Spleen (tissue), 13 donors: ENCODE measurements at regions of chr10 and their contacts with region 1.

Region 1: DNA sequence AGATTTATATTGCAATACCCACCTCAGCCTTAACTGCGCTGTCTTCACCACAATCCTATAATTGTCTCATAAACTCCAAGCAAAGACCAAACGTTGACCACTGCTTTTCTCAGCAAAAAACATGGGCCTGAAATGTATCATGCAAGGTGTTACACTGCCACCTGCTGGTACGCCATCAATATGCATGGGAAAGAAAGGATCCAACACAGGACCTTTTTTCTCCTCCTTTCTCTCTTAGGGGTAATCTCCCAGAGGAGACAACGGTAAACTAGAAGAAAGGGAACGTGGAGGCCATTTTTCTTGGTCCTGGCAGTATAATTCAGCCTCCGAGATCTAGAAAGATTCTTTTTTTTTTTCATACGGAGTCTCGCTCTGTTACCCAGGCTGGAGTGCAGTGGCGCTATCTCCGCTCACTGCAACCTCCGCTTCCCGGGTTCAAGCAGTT is 79.1 kb upstream of the MPP7 start:
- DNase-seq: peak; percentile 83
- H3K4me3 ChIP-seq: no peak overlapping the region
- H3K27ac ChIP-seq: peak overlapping the region in 5 of 8 donors; percentile 2 to 80 (median 60)
- H3K4me1 ChIP-seq: peaks cover 0 to 26% (median 5%) of the 10 kb centered on the region in 6 donors
- H3K27me3 ChIP-seq: peaks cover 0 to 18% (median 0%) of the 10 kb centered on the region in 7 donors
- CTCF ChIP-seq: peak; percentile 85 to 96 (median 93)
- POLR2A ChIP-seq: no peak

Region 2: DNA sequence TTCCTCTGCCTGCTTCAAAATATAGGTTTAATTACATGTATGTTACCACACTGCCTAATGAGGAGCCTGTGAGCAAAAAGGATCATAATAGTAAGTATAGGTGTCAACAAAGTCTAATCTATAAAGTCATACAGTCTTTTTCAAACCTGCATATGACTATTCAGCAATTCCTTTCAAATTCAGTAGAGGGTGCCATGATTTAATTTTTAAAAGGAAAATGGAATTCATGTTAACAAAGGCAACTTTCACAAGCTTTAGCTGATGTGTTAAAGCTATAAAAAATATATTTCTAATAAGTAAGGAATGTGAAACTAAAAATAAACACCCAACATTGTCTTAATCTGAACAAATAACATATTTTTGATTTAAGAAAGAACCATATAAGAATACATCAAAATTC is 131.1 kb before region 1 on chr10:
- intact Hi-C with region 1: loop called (anchors 2 kb)
- DNase-seq: no peak
- H3K4me3 ChIP-seq: no peak overlapping the region
- H3K27ac ChIP-seq: no peak overlapping the region
- H3K4me1 ChIP-seq: peaks cover 0 to 27% (median 4%) of the 10 kb centered on the region in 6 donors
- H3K27me3 ChIP-seq: no peaks in the 10 kb centered on the region
- CTCF ChIP-seq: peak in 10 of 11 experiments; percentile 18 to 65 (median 44)
- POLR2A ChIP-seq: no peak

Region 3: GRCh38 chr10:28291881-28292297 is 90.0 kb before region 1 on chr10:
- intact Hi-C with region 1: no loop called
- DNase-seq: no peak
- H3K4me3 ChIP-seq: no peak overlapping the region
- H3K27ac ChIP-seq: no peak overlapping the region
- H3K4me1 ChIP-seq: peaks cover 0 to 31% (median 0%) of the 10 kb centered on the region in 6 donors
- H3K27me3 ChIP-seq: no peaks in the 10 kb centered on the region
- CTCF ChIP-seq: no peak
- POLR2A ChIP-seq: no peak

Region 4: DNA sequence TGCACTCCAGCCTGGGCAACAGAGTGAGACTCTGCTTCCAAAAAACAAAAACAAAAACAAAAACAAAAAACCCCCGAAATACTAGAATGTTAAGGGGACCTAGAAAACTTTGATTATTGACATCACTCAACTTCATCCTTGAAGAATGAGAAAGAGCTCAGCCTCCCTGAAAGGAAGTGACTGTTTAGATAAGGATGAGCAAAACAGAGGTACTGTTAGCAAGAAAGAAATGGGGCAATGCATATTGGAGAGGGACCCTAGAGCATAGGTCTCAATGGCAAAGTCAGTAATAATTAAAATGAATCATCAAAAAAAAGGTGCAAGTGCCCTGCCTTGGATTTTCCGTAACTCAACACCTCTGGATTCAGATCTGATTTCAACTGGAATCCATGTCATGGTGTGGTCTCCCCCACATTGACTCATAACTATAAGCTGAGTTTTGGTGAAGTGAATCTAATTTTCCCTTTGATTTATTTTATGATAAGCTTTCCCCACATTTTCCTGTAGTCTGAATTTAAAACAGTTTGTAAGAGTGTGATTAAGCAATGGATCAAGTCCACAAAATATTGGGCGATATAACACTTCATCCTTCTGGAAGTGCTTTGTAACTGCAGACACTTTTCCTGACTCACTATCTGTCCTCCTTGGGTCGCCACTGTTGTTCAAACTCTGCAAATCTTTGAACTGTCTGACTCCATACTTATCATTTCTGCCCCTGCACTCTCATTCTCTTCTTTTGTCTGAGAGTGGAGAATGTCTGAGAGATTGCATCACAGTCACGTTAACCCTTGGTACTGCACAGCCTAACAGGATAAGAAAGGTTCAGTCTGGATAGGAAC is 682.1 kb after region 1 on chr10:
- intact Hi-C with region 1: no loop called
- DNase-seq: no peak
- H3K4me3 ChIP-seq: no peak overlapping the region
- H3K27ac ChIP-seq: no peak overlapping the region
- H3K4me1 ChIP-seq: no peaks in the 10 kb centered on the region
- H3K27me3 ChIP-seq: no peaks in the 10 kb centered on the region
- CTCF ChIP-seq: no peak
- POLR2A ChIP-seq: no peak